Activated CD4-positive, alpha-beta T cell treated with anti-CD3 and anti-CD28 coated beads, Interleukin-2, amount 10 ng/mL, durations not matched to agents 7 days and 5 days (primary cell): ENCODE measurements at regions of chr11 and their contacts with region 1.

Region 1: GRCh38 chr11:62665075-62665598 is at the starts of genes C11orf98 and CSKMT:
- DNase-seq: peak; percentile 96
- H3K4me3 Mint-ChIP-seq: peak within 1 kb of the TSS; percentile 98
- H3K27ac Mint-ChIP-seq: peak within 1 kb of the TSS; percentile 93
- H3K4me1 Mint-ChIP-seq: peaks cover 41% of the 10 kb centered on the region
- H3K27me3 Mint-ChIP-seq: no peaks in the 10 kb centered on the region
- total RNA-seq, gene C11orf98: 86.0 to 93.9 TPM
- total RNA-seq, gene CSKMT: 11.0 to 18.2 TPM

Region 2: GRCh38 chr11:62645956-62646824 is 18.9 kb before region 1 on chr11 and contains the start of gene GANAB:
- CTCF ChIA-PET with region 1: interaction called, 12 read pairs
- POLR2A ChIA-PET with region 1: interaction called, 9 read pairs
- DNase-seq: peak; percentile 100
- H3K4me3 Mint-ChIP-seq: peak within 1 kb of the TSS; percentile 97
- H3K27ac Mint-ChIP-seq: peak within 1 kb of the TSS; percentile 95
- H3K4me1 Mint-ChIP-seq: peaks cover 42% of the 10 kb centered on the region
- H3K27me3 Mint-ChIP-seq: no peaks in the 10 kb centered on the region
- total RNA-seq, gene GANAB: 290 to 291 TPM

Region 3: DNA sequence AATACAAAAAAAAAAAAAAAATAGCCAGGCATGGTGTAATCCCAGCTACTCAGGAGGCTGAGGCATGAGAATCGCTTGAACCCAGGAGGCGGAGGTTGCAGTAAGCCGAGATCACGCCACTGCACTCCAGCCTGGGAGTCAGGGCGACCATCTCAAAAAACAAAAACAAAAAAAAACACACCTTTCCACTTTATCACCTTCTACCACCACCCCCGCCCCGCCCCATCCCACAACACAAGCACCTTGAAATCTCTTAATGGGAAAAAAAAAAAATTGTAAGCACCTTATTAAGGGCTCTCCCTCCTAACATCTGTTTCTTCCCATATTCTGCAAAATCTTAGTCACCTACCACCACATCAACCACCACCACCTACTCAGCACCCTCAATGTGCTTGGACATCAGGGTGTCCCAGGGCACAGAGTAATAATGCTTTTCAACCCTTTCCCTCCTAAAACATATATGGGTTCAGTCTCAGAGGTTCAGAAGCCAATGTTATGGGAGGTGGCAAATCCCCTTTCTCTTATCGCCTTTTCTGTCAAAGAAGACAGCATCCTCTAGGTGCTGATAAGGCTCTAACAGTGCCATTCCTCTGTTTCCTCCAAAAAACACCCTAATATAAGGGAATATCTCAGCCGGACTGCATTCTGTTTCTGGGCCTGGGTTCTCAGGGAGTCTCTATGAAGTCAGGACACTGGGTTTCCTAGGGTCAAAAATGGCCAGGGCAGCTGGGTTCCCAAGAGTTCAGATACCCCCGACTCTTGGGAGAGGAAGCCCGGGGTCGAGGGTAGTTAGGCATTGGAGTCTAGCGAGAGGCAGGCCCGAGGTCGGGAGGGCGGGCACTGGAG is 12.8 kb before region 1 on chr11:
- CTCF ChIA-PET with region 1: interaction called, 10 read pairs
- POLR2A ChIA-PET with region 1: interaction called, 14 read pairs
- DNase-seq: no peak
- H3K4me3 Mint-ChIP-seq: peak overlapping the region; percentile 91
- H3K27ac Mint-ChIP-seq: peak overlapping the region; percentile 91
- H3K4me1 Mint-ChIP-seq: peaks cover 27% of the 10 kb centered on the region
- H3K27me3 Mint-ChIP-seq: no peaks in the 10 kb centered on the region